Activated CD4-positive, alpha-beta memory T cell treated with anti-CD3 and anti-CD28 coated beads, Interleukin-2, amount 10 ng/mL, durations not matched to agents 7 days and 5 days (primary cell): ENCODE measurements at regions of chr11 and their contacts with region 1.

Region 1: GRCh38 chr11:75814686-75815344 is at the start of gene UVRAG:
- DNase-seq: peak; percentile 98
- H3K4me3 Mint-ChIP-seq: no peak within 1 kb of the TSS
- H3K27ac Mint-ChIP-seq: peak within 1 kb of the TSS; percentile 84
- H3K4me1 Mint-ChIP-seq: peaks cover 22% of the 10 kb centered on the region
- H3K27me3 Mint-ChIP-seq: no peaks in the 10 kb centered on the region
- total RNA-seq, gene UVRAG: 18.2 to 19.9 TPM

Region 2: GRCh38 chr11:75802913-75803820 is 11.6 kb before region 1 on chr11:
- CTCF ChIA-PET with region 1: interaction called, 59 read pairs
- POLR2A ChIA-PET with region 1: interaction called, 4 read pairs
- DNase-seq: peak; percentile 76
- H3K4me3 Mint-ChIP-seq: no peak overlapping the region
- H3K27ac Mint-ChIP-seq: no peak overlapping the region
- H3K4me1 Mint-ChIP-seq: peaks cover 20% of the 10 kb centered on the region
- H3K27me3 Mint-ChIP-seq: peaks cover 2% of the 10 kb centered on the region